Aorta (tissue), 5 donors: ENCODE measurements at regions of chr6 and their contacts with region 1.

Region 1: GRCh38 chr6:56484669-56485068 is 158.0 kb downstream of the DST start:
- DNase-seq: no peak
- ATAC-seq: no peak
- H3K4me3 ChIP-seq: no peak overlapping the region
- H3K27ac ChIP-seq: no peak overlapping the region
- H3K4me1 ChIP-seq: peaks cover 0 to 3% of the 10 kb centered on the region in 2 donors
- H3K27me3 ChIP-seq: no peaks in the 10 kb centered on the region

Region 2: GRCh38 chr6:56534680-56535419 is 50.2 kb after region 1 on chr6:
- intact Hi-C with region 1: loop called in 1 of 2 experiments (anchors 5 kb)
- DNase-seq: no peak
- ATAC-seq: no peak
- H3K4me3 ChIP-seq: no peak overlapping the region
- H3K27ac ChIP-seq: no peak overlapping the region
- H3K4me1 ChIP-seq: peaks cover 2 to 10% of the 10 kb centered on the region in 2 donors
- H3K27me3 ChIP-seq: no peaks in the 10 kb centered on the region